ENCODE measurements at regions of chr22 and their contacts with region 1.

Region 1: DNA sequence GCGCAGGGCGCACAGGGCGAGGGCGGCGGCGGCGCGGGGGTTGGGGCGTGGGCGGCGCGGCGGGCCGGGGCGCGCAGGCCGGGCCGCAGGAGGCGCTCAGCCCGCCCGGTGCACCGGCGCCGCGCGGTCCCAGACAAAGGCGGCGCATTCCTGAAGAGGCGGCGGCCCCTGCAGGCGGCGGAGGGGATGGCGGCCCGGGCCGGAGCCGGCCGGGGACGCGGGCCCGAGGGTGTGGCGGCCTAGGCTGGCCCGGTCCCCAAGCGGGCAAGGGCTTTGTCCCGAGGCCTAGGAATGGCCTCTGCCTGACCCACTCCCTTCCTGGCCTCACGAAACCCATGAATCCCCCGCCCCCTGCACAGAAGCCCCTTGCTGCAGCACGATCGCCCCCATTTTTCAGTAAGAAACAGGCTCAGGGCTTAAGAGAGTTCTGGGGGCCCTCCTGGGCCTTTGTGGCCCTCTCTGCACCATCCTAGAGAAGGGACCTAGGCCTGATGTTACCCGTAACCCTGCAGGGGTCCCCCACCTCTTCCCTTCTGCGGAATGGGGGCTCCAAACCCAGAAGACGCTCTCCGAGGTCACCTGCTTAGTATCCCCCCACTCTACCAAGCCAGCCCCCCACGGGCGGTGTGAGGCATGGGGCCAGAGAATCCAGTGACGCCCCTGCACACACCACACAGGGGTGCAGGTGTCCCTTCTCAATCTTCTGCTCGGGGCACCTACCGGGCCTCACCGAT is at the start of gene RTN4R:
- DNase-seq: peak; percentile 75
- ATAC-seq: peak; percentile 84 to 85
- H3K4me3 ChIP-seq: peak within 1 kb of the TSS; percentile 57
- H3K27ac ChIP-seq: peak within 1 kb of the TSS; percentile 24
- H3K4me1 ChIP-seq: peaks cover 9% of the 10 kb centered on the region
- H3K27me3 ChIP-seq: no peaks in the 10 kb centered on the region
- CTCF ChIP-seq: peak; percentile 62
- total RNA-seq, gene RTN4R: 9.6 TPM

Region 2: GRCh38 chr22:20164863-20165262 is 103.6 kb before region 1 on chr22:
- intact Hi-C with region 1: loop called (anchors 10 kb)
- DNase-seq: no peak
- ATAC-seq: no peak
- H3K4me3 ChIP-seq: no peak overlapping the region
- H3K27ac ChIP-seq: no peak overlapping the region
- H3K4me1 ChIP-seq: no peaks in the 10 kb centered on the region
- H3K27me3 ChIP-seq: no peaks in the 10 kb centered on the region
- CTCF ChIP-seq: no peak

Region 3: GRCh38 chr22:20507253-20508066 is 239.0 kb after region 1 on chr22 and contains the start of gene MED15:
- intact Hi-C with region 1: no loop called
- DNase-seq: peak; percentile 94
- ATAC-seq: peak; percentile 93 to 95
- H3K4me3 ChIP-seq: peak within 1 kb of the TSS; percentile 92
- H3K27ac ChIP-seq: peak within 1 kb of the TSS; percentile 97
- H3K4me1 ChIP-seq: peaks cover 44% of the 10 kb centered on the region
- H3K27me3 ChIP-seq: no peaks in the 10 kb centered on the region
- CTCF ChIP-seq: no peak
- total RNA-seq, gene MED15: 105 TPM

Measured in lower lobe of right lung (tissue), 2 donors.